Pancreas (tissue), 10 donors: ENCODE measurements at regions of chr1 and their contacts with region 1.

Region 1: DNA sequence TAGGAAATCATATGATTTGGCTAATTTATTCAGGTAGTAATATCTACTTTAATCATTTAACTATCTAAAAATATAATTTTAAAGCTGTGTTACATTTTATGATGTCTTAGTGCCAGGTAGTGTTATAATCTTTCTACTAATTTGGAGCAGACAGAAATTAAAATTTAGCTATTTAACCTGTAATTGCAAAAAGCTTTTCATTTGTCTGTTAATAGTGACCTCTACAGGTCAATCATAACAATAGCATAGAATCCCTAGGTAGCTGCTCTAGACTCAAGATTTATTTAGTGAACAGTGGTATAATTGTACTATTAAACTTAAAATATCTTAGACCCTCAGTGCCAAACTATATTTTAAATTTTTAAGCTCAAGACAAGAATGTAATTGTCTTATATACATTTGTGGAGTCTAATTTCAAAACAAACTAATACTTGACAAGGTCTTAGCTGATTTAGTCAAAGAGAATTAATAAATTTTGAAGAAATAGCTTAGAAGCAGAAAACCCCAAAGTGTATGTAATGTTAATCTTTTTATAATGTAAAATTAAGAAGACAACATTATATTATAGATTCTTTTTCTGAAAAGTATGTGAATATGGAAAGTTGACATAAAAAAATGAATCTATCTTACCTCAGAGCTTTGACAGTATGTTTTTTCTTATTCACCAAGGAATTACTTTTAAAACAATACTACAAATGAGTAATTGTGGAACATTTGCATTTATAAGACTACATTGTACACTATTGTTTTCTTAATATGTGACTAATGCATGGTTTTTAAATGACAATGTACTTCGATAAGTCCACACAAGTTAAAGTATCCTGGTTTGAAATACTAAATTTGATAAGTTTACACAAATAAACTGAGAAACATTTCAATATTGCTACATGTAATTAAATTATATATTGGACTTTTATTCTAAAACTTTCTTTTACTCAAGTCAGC is 64.1 kb upstream of the RNPC3 start:
- DNase-seq: no peak
- ATAC-seq: peak in 3 of 4 donors; percentile 53 to 65 (median 62)
- H3K4me3 ChIP-seq: no peak overlapping the region
- H3K27ac ChIP-seq: no peak overlapping the region
- H3K4me1 ChIP-seq: no peaks in the 10 kb centered on the region
- H3K27me3 ChIP-seq: no peaks in the 10 kb centered on the region
- CTCF ChIP-seq: peak in 3 of 4 donors; percentile 31 to 58 (median 43)

Region 2: DNA sequence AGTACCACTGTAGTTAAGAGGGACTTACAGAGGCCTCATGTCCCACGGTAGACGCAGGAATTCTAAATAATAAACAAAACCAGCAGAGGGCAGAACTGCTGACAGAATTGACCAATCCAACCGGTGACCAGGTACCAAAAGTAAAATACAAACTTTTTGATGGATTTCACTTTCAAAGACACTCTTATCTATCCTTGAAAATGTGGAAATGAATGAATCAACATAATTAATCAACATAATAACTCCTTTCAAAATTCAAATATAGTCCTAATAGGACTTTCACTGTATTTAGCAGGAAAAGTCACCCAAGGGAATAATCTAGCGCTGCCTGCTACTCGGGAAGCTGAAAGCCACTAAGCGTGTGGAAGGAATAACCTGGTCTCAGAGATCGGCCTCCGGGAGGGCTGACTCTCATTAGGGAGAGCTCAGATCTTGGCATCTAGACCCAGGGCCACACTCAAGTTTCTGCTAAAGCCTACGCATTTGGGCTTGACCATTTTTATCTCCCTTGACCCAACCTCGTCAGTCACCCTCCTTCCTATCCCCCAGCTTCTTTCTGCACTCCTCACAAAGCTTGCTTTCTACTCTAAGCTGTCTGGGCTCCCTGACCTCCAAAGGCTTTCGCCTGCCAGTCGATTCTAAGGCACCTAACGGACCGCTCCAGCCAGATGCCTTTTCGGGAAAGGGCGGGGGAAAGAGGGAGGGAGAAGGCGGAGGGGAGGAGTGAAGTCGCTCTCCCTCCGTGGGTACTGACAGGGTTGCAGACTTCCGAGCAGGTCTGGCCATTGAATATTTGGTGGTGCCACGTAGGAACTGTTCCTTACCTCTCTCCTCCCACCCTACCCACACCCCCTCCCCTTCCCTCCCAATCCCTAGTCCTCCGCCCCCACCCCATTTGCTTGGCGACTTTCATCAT is 354.7 kb before region 1 on chr1:
- intact Hi-C with region 1: loop called in 2 of 3 experiments (anchors 10 kb)
- DNase-seq: peak in 5 of 6 donors; percentile 21 to 36 (median 27)
- ATAC-seq: peak; percentile 77 to 88 (median 86)
- H3K4me3 ChIP-seq: peak overlapping the region in 3 of 4 donors; percentile 9 to 46 (median 34)
- H3K27ac ChIP-seq: no peak overlapping the region
- H3K4me1 ChIP-seq: no peaks in the 10 kb centered on the region
- H3K27me3 ChIP-seq: no peaks in the 10 kb centered on the region
- CTCF ChIP-seq: peak in 3 of 4 donors; percentile 32 to 44 (median 42)

Region 3: DNA sequence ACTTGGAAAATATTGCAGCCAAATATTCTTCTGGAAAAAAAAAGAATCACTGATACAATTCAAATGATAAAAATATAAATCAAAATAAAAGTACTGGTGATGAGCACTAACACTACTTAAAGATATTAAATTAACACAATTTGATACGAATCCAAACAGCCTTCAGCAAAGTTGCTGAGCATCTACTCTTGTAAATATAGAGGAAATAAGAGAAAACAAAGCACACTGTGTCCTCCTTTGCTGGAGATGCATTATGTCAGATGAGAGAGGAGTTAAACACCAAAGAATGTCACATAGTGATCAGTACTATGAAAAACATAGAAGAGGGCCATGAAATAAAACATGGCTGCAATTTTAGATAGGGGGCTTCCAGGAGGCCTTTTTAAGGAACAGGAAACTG is 113.3 kb before region 1 on chr1:
- intact Hi-C with region 1: no loop called
- DNase-seq: no peak
- ATAC-seq: no peak
- H3K4me3 ChIP-seq: no peak overlapping the region
- H3K27ac ChIP-seq: no peak overlapping the region
- H3K4me1 ChIP-seq: no peaks in the 10 kb centered on the region
- H3K27me3 ChIP-seq: no peaks in the 10 kb centered on the region
- CTCF ChIP-seq: no peak

Region 4: DNA sequence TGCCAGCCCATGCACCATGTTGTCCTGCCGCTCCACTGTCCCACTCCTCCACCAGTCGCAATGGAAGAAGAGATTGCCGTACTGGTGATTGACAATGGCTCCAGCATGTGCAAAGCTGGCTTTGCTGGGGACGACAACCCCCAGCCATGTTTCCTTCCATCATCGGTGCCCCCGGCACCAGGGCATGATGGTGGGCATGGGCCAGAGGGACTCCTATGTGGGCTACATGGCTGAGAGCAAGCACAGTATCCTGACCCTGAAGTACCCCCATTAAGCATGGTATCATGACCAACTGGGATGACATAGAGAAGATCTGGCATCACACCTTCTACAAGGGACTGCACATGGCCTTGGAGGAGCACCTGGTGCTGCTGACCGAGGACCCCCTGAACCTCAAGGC is 108.1 kb after region 1 on chr1:
- intact Hi-C with region 1: no loop called
- DNase-seq: peak in 1 of 6 donors; percentile 19
- ATAC-seq: no peak
- H3K4me3 ChIP-seq: no peak overlapping the region
- H3K27ac ChIP-seq: no peak overlapping the region
- H3K4me1 ChIP-seq: peaks cover 0 to 6% (median 2%) of the 10 kb centered on the region in 3 donors
- H3K27me3 ChIP-seq: no peaks in the 10 kb centered on the region
- CTCF ChIP-seq: no peak